ENCODE measurements at regions of chr1 and their contacts with region 1.

Region 1: GRCh38 chr1:8015036-8015808 is 10.9 kb downstream of the ERRFI1 start:
- DNase-seq: no peak
- ATAC-seq: peak; percentile 45
- H3K4me3 Mint-ChIP-seq: no peak overlapping the region
- H3K27ac Mint-ChIP-seq: no peak overlapping the region
- H3K4me1 Mint-ChIP-seq: peaks cover 3% of the 10 kb centered on the region
- H3K27me3 Mint-ChIP-seq: peaks cover 17% of the 10 kb centered on the region
- CTCF ChIP-seq: no peak

Region 2: DNA sequence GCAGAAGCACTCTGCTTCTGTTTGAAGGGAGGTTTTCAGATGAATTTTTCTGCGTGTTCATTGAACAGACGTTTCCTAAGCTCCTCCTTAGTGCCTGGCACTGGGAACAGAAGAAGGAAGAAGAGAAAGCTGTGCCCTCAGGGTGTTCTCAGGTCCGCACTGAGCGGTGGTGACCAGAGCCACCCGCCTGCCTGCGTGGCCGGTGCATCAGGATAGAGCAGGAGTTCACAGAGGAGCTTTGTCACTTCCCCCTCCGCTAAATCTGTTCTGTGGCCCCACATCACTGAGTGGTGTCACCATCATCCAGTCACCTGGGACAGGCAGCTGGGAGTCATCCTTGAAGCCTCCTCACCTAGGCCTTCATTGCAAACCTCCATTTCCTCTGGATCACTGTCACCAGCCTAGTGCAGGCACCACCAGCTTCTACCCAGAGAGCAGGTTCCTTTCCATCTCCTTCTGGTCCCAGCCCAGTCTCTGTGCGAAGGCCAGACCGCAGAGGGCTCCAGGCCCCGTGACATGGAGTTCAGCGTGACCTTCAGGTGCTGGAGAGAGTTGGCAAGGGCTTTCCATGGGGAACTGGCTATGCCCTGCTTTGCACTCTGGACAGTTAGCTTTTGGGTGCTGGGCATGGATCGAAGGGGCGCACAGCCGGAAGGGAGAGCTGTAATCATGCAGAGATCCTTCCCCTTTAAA is 32.0 kb before region 1 on chr1:
- CTCF ChIA-PET with region 1: interaction called, 9 read pairs
- POLR2A ChIA-PET with region 1: no interaction called
- intact Hi-C with region 1: loop called (anchors 2 kb)
- DNase-seq: no peak
- ATAC-seq: no peak
- H3K4me3 Mint-ChIP-seq: no peak overlapping the region
- H3K27ac Mint-ChIP-seq: no peak overlapping the region
- H3K4me1 Mint-ChIP-seq: peaks cover 6% of the 10 kb centered on the region
- H3K27me3 Mint-ChIP-seq: no peaks in the 10 kb centered on the region
- CTCF ChIP-seq: no peak

Region 3: GRCh38 chr1:8070381-8070811 is 55.2 kb after region 1 on chr1:
- CTCF ChIA-PET with region 1: no interaction called
- POLR2A ChIA-PET with region 1: no interaction called
- intact Hi-C with region 1: no loop called
- DNase-seq: no peak
- ATAC-seq: no peak
- H3K4me3 Mint-ChIP-seq: no peak overlapping the region
- H3K27ac Mint-ChIP-seq: no peak overlapping the region
- H3K4me1 Mint-ChIP-seq: no peaks in the 10 kb centered on the region
- H3K27me3 Mint-ChIP-seq: peaks cover 17% of the 10 kb centered on the region
- CTCF ChIP-seq: no peak

Region 4: GRCh38 chr1:8314346-8315280 is 299.4 kb after region 1 on chr1:
- CTCF ChIA-PET with region 1: interaction called, 10 read pairs
- POLR2A ChIA-PET with region 1: no interaction called
- intact Hi-C with region 1: loop called (anchors 1 kb)
- DNase-seq: no peak
- ATAC-seq: no peak
- H3K4me3 Mint-ChIP-seq: no peak overlapping the region
- H3K27ac Mint-ChIP-seq: no peak overlapping the region
- H3K4me1 Mint-ChIP-seq: peaks cover 14% of the 10 kb centered on the region
- H3K27me3 Mint-ChIP-seq: peaks cover 38% of the 10 kb centered on the region
- CTCF ChIP-seq: no peak

Region 5: GRCh38 chr1:8348777-8349491 is 333.7 kb after region 1 on chr1:
- CTCF ChIA-PET with region 1: interaction called, 83 read pairs
- POLR2A ChIA-PET with region 1: no interaction called
- intact Hi-C with region 1: loop called (anchors 1 kb)
- DNase-seq: peak; percentile 64
- ATAC-seq: peak; percentile 89
- H3K4me3 Mint-ChIP-seq: no peak overlapping the region
- H3K27ac Mint-ChIP-seq: no peak overlapping the region
- H3K4me1 Mint-ChIP-seq: peaks cover 4% of the 10 kb centered on the region
- H3K27me3 Mint-ChIP-seq: no peaks in the 10 kb centered on the region
- CTCF ChIP-seq: no peak

Region 6: DNA sequence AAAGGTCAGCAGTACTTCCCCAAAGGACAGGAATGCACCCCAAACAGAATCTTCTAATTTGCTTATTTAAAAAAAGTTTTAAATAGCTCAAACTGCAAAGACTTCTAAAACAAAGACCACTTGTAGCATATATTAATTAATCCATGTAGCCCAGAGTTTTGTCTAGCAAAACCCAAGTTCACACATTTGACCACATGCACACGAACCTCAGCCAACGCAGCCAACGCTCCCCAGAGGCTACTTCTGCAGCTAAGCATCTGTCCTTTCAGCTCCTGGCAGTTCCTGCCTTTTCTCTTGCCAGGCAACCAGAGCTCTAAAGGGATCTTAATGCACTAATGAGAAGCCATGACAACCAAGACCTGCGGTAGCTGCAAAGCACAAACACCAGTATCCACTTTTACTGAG is 712.6 kb after region 1 on chr1:
- CTCF ChIA-PET with region 1: interaction called, 11 read pairs
- POLR2A ChIA-PET with region 1: no interaction called
- intact Hi-C with region 1: loop called (anchors 1 kb)
- DNase-seq: no peak
- ATAC-seq: no peak
- H3K4me3 Mint-ChIP-seq: no peak overlapping the region
- H3K27ac Mint-ChIP-seq: no peak overlapping the region
- H3K4me1 Mint-ChIP-seq: peaks cover 18% of the 10 kb centered on the region
- H3K27me3 Mint-ChIP-seq: no peaks in the 10 kb centered on the region
- CTCF ChIP-seq: no peak

Measured in activated B cell treated with CpG ODN at 0.5 μM for 24 hours (primary cell).